Activated CD4-positive, alpha-beta T cell treated with anti-CD3 and anti-CD28 coated beads for 36 hours (primary cell): ENCODE measurements at regions of chr7 and their contacts with region 1.

Region 1: GRCh38 chr7:50266635-50267386 is 37.7 kb upstream of the IKZF1 start:
- DNase-seq: peak; percentile 87
- ATAC-seq: peak; percentile 77
- H3K4me3 Mint-ChIP-seq: peak overlapping the region; percentile 58
- H3K27ac Mint-ChIP-seq: peak overlapping the region; percentile 98
- H3K4me1 Mint-ChIP-seq: peaks cover 94% of the 10 kb centered on the region
- H3K27me3 Mint-ChIP-seq: no peaks in the 10 kb centered on the region

Region 2: GRCh38 chr7:50147951-50148808 is 118.6 kb before region 1 on chr7:
- CTCF ChIA-PET with region 1: interaction called, 3 read pairs
- POLR2A ChIA-PET with region 1: interaction called, 9 read pairs
- intact Hi-C with region 1: loop called (anchors 2 kb)
- DNase-seq: peak; percentile 65
- ATAC-seq: peak; percentile 89
- H3K4me3 Mint-ChIP-seq: peak overlapping the region; percentile 40
- H3K27ac Mint-ChIP-seq: peak overlapping the region; percentile 90
- H3K4me1 Mint-ChIP-seq: peaks cover 85% of the 10 kb centered on the region
- H3K27me3 Mint-ChIP-seq: no peaks in the 10 kb centered on the region

Region 3: GRCh38 chr7:50281680-50282445 is 15.1 kb after region 1 on chr7:
- CTCF ChIA-PET with region 1: interaction called, 7 read pairs
- POLR2A ChIA-PET with region 1: interaction called, 4 read pairs
- intact Hi-C with region 1: loop called in 1 of 2 experiments (anchors 1 kb)
- DNase-seq: no peak
- ATAC-seq: peak; percentile 64
- H3K4me3 Mint-ChIP-seq: peak overlapping the region; percentile 55
- H3K27ac Mint-ChIP-seq: peak overlapping the region; percentile 85
- H3K4me1 Mint-ChIP-seq: peaks cover 64% of the 10 kb centered on the region
- H3K27me3 Mint-ChIP-seq: no peaks in the 10 kb centered on the region

Region 4: GRCh38 chr7:50317221-50317678 is 50.4 kb after region 1 on chr7:
- CTCF ChIA-PET with region 1: interaction called, 5 read pairs
- POLR2A ChIA-PET with region 1: interaction called, 4 read pairs
- intact Hi-C with region 1: loop called (anchors 1 to 2 kb)
- DNase-seq: peak; percentile 73
- ATAC-seq: peak; percentile 82
- H3K4me3 Mint-ChIP-seq: peak overlapping the region; percentile 95
- H3K27ac Mint-ChIP-seq: peak overlapping the region; percentile 100
- H3K4me1 Mint-ChIP-seq: peaks cover 93% of the 10 kb centered on the region
- H3K27me3 Mint-ChIP-seq: no peaks in the 10 kb centered on the region

Region 5: GRCh38 chr7:50369143-50370026 is 102.6 kb after region 1 on chr7:
- CTCF ChIA-PET with region 1: interaction called, 21 read pairs
- POLR2A ChIA-PET with region 1: interaction called, 6 read pairs
- intact Hi-C with region 1: loop called in 1 of 2 experiments (anchors 1 kb)
- DNase-seq: peak; percentile 62
- ATAC-seq: no peak
- H3K4me3 Mint-ChIP-seq: peak overlapping the region; percentile 10
- H3K27ac Mint-ChIP-seq: peak overlapping the region; percentile 88
- H3K4me1 Mint-ChIP-seq: peaks cover 96% of the 10 kb centered on the region
- H3K27me3 Mint-ChIP-seq: no peaks in the 10 kb centered on the region